B cell (primary cell): ENCODE measurements at regions of chrX and their contacts with region 1.

Region 1: DNA sequence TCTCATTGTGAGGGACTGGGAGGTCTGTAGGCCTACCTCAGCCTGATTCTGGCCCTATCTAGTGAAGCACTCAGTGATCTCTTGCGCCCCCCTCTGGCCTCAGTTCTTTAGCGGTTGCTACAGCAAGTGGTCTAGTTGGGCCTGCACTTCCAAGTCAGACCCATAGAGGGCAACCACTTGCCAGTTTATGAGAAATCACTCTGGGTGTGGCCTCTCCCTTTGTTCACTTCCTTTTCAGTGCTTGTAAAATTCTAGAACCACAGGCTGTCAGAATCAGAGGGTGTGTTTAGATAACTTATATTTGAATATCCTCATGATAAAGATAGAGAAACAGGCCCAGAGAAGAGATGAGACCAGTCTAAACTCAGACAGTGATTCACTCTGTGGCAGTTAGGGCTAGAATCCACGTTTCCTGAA is 60.9 kb upstream of the LAS1L start:
- DNase-seq: peak; percentile 91
- ATAC-seq: peak; percentile 90
- H3K4me3 ChIP-seq: peak overlapping the region in 2 of 5 experiments; percentile 9 to 25
- H3K4me3 Mint-ChIP-seq: peak overlapping the region; percentile 84
- H3K27ac ChIP-seq: peak overlapping the region; percentile 90 to 93
- H3K27ac Mint-ChIP-seq: peak overlapping the region; percentile 96
- H3K4me1 ChIP-seq: peaks cover 42 to 45% of the 10 kb centered on the region in 2 donors
- H3K4me1 Mint-ChIP-seq: peaks cover 39% of the 10 kb centered on the region
- H3K27me3 ChIP-seq: no peaks in the 10 kb centered on the region
- H3K27me3 Mint-ChIP-seq: no peaks in the 10 kb centered on the region
- CTCF ChIP-seq: peak; percentile 84

Region 2: DNA sequence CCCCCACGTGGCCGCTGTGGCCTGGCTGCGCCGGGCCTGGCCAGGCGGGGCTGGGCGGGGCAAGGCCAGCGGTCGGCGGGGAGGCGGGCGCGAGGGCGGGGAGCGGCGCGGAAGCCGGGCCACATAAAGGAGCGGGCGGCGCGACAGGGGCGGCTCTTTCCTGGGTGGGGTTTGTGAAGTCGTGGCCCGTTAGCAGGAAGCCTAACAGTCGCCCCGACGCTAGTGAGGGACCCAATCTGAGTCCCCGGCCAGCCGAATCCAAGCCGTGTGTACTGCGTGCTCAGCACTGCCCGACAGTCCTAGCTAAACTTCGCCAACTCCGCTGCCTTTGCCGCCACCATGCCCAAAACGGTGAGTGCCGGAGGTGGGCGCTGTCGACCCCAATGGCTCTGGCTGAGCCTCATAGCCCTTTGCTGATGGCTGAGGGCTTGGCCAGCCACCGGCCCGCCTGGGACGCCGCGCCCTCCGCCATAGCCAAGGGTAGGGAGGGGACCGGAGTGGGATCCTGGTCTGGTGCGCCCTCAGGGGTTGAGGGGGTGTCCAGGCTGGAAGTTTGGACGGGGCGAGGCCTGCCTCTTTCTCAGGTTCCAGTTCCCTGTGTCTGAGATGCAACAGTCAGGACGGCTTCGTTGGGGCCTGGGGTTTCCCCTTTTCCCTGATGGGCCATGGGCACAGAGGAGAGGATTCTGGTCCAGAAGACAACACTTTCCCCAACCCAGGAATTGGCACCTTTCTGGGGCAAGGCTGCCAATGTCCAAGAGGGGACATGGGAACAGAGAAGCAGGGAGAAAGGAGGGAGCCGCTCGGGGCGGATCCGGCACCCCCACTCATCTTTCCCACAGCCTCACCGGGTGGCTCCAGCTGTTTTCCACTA is 72.3 kb after region 1 on chrX and contains the start of gene MSN:
- CTCF ChIA-PET with region 1: interaction called, 6 read pairs
- POLR2A ChIA-PET with region 1: interaction called, 8 read pairs
- intact Hi-C with region 1: loop called (anchors 1 kb)
- DNase-seq: peak; percentile 70
- ATAC-seq: peak; percentile 79
- H3K4me3 ChIP-seq: peak within 1 kb of the TSS; percentile 68 to 78 (median 71)
- H3K4me3 Mint-ChIP-seq: peak within 1 kb of the TSS; percentile 96
- H3K27ac ChIP-seq: peak within 1 kb of the TSS; percentile 53 to 72
- H3K27ac Mint-ChIP-seq: peak within 1 kb of the TSS; percentile 91
- H3K4me1 ChIP-seq: peaks cover 32 to 39% of the 10 kb centered on the region in 2 donors
- H3K4me1 Mint-ChIP-seq: peaks cover 41% of the 10 kb centered on the region
- H3K27me3 ChIP-seq: no peaks in the 10 kb centered on the region
- H3K27me3 Mint-ChIP-seq: no peaks in the 10 kb centered on the region
- CTCF ChIP-seq: no peak
- total RNA-seq, gene MSN: 413 and 414 TPM in 2 replicates

Region 3: DNA sequence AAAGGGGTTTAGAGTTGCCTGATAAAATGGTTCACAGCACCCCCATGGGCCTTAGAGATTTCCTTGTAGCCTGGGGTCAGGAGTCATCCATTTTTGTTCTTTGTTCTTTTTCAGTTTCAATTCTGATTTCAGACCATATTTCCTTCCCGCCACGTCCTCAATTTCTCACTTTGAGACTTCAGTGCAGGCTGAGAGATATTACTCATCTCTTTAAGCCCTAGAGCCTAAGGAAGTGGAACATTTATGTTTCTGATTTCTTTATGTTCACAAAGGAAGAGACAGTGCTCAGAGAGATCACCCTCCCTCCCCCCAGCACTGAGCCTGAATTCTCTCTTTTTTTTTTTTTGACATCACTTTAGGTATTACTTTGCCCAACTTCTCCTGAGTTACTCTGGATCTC is 128.2 kb after region 1 on chrX:
- CTCF ChIA-PET with region 1: no interaction called
- POLR2A ChIA-PET with region 1: no interaction called
- intact Hi-C with region 1: loop called (anchors 5 kb)
- DNase-seq: peak; percentile 33
- ATAC-seq: peak; percentile 50
- H3K4me3 ChIP-seq: no peak overlapping the region
- H3K4me3 Mint-ChIP-seq: peak overlapping the region; percentile 53
- H3K27ac ChIP-seq: peak overlapping the region in 1 of 2 donors; percentile 72
- H3K27ac Mint-ChIP-seq: peak overlapping the region; percentile 86
- H3K4me1 ChIP-seq: peaks cover 51 to 69% of the 10 kb centered on the region in 2 donors
- H3K4me1 Mint-ChIP-seq: peaks cover 82% of the 10 kb centered on the region
- H3K27me3 ChIP-seq: no peaks in the 10 kb centered on the region
- H3K27me3 Mint-ChIP-seq: no peaks in the 10 kb centered on the region
- CTCF ChIP-seq: no peak

Region 4: DNA sequence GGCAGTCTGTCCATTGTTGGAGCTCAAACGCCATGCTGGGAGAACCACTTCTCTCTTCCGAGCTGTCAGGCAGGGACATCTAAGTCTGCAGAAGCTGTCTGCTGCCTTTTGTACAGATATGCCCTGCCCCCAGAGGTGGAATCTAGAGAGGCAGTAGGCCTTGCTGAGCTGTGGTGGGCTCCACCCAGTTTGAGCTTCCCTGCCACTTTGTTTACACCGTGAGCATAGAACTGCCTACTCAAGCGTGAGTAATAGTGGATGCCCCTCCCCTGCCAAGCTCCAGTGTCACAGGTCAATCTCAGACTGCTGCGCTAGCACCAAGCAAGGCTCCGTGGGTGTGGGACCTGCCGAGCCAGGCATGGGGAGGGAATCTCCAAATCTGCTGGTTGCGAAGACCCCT is 298.7 kb after region 1 on chrX:
- CTCF ChIA-PET with region 1: interaction called, 6 read pairs
- POLR2A ChIA-PET with region 1: no interaction called
- intact Hi-C with region 1: loop called (anchors 1 kb)
- DNase-seq: peak; percentile 56
- ATAC-seq: peak; percentile 86
- H3K4me3 ChIP-seq: peak overlapping the region in 2 of 5 experiments; percentile 17 to 19
- H3K4me3 Mint-ChIP-seq: peak overlapping the region; percentile 70
- H3K27ac ChIP-seq: peak overlapping the region in 1 of 2 donors; percentile 40
- H3K27ac Mint-ChIP-seq: peak overlapping the region; percentile 77
- H3K4me1 ChIP-seq: peaks cover 15 to 24% of the 10 kb centered on the region in 2 donors
- H3K4me1 Mint-ChIP-seq: peaks cover 36% of the 10 kb centered on the region
- H3K27me3 ChIP-seq: no peaks in the 10 kb centered on the region
- H3K27me3 Mint-ChIP-seq: no peaks in the 10 kb centered on the region
- CTCF ChIP-seq: no peak

Region 5: DNA sequence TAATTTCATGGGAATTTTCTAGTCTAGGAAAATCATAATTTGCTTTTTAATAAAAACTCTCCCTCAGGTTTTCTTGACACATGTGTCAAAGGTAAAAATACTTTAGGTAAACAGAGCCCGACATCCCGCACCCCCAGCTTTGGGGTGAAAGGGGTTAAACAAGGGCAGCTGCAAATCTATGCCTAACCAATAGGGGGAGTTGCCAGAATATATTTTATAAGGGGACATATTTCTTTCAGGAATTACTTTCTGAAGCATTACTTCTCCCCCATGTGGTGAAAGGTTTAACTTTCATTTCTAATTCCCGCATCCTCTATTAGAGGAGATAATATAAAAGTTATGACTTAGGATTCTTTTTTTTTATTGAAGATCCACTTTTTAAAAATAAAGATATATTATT is 514.6 kb after region 1 on chrX:
- CTCF ChIA-PET with region 1: no interaction called
- POLR2A ChIA-PET with region 1: no interaction called
- intact Hi-C with region 1: loop called (anchors 1 kb)
- DNase-seq: peak; percentile 42
- ATAC-seq: peak; percentile 51
- H3K4me3 ChIP-seq: no peak overlapping the region
- H3K4me3 Mint-ChIP-seq: no peak overlapping the region
- H3K27ac ChIP-seq: no peak overlapping the region
- H3K27ac Mint-ChIP-seq: no peak overlapping the region
- H3K4me1 ChIP-seq: peaks cover 0 to 8% of the 10 kb centered on the region in 2 donors
- H3K4me1 Mint-ChIP-seq: peaks cover 9% of the 10 kb centered on the region
- H3K27me3 ChIP-seq: peaks cover 0 to 2% (median 0%) of the 10 kb centered on the region in 4 experiments
- H3K27me3 Mint-ChIP-seq: no peaks in the 10 kb centered on the region
- CTCF ChIP-seq: peak; percentile 71